ENCODE measurements at regions of chr2 and their contacts with region 1.

Region 1: GRCh38 chr2:98731894-98732349 is 990 bp upstream of the MGAT4A start:
- DNase-seq: no peak
- H3K4me3 ChIP-seq: peak overlapping the region; percentile 71 to 98 (median 81)
- H3K27ac ChIP-seq: peak overlapping the region; percentile 87
- H3K4me1 ChIP-seq: peaks cover 2 to 5% of the 10 kb centered on the region in 2 donors
- H3K27me3 ChIP-seq: no peaks in the 10 kb centered on the region
- CTCF ChIP-seq: no peak
- POLR2A ChIP-seq: no peak

Region 2: DNA sequence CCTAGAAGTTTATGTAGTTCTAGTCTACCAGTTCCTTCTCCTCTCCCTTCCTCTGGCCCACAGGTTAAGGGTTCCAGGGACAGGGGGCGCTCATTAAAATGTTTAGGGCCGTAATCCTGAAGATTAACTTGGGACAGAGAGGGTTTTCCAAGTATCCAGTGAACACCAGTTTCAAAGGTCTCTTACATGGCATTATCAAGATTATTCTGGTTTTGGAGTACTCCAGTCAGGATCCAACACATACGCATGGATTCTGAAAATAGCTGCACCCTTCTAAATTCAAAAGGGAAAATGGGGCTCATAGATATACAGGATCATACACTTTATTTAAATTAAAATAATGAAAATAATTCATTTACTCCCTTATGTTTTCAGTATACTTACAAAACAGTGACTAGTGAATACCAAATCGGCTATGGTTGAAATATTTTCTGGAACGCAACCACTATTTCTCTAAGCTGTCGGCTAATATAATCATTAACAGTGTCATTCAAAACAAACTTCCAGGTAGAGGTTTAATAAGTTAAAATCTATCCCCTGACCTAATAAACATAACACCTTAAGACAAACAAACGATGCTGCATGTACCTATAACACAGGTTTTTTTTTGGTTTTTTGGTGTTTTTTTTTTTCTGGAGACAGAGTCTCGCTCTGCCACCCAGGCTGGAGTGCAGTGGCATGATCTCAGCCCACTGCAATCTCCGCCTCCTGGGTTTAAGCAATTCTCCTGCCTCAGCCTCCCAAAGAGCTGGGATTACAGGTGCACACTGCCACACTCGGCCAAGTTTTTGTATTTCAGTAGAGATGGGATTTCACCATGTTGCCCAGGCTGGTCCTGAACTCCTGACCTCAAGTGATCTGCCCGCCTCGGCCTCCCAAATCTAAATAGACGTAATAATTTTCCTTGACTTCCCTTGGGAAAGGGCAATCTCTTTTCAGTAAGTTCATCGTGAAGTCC is 45.7 kb before region 1 on chr2:
- intact Hi-C with region 1: no loop called
- DNase-seq: no peak
- H3K4me3 ChIP-seq: no peak overlapping the region
- H3K27ac ChIP-seq: no peak overlapping the region
- H3K4me1 ChIP-seq: no peaks in the 10 kb centered on the region
- H3K27me3 ChIP-seq: no peaks in the 10 kb centered on the region
- CTCF ChIP-seq: no peak
- POLR2A ChIP-seq: no peak

Region 3: GRCh38 chr2:98764509-98764908 is 32.6 kb after region 1 on chr2:
- intact Hi-C with region 1: loop called (anchors 2 kb)
- DNase-seq: no peak
- H3K4me3 ChIP-seq: no peak overlapping the region
- H3K27ac ChIP-seq: no peak overlapping the region
- H3K4me1 ChIP-seq: peaks cover 0 to 7% of the 10 kb centered on the region in 2 donors
- H3K27me3 ChIP-seq: no peaks in the 10 kb centered on the region
- CTCF ChIP-seq: no peak
- POLR2A ChIP-seq: no peak

Measured in breast epithelium (tissue), 4 donors.